GM12878 (cell line): ENCODE measurements at regions of chr1 and their contacts with region 1.

Region 1: GRCh38 chr1:176880954-176881595 is 283.4 kb downstream of the ASTN1 start:
- DNase-seq: no peak
- ATAC-seq: peak; percentile 87
- H3K4me3 ChIP-seq: no peak overlapping the region
- H3K27ac ChIP-seq: no peak overlapping the region
- H3K4me1 ChIP-seq: no peaks in the 10 kb centered on the region
- H3K27me3 ChIP-seq: peaks cover 3% of the 10 kb centered on the region in 2 experiments; a peak in 2 of 4 replicates
- CTCF ChIP-seq: peak; percentile 78 to 86 (median 82)
- EP300 ChIP-seq: no peak
- POLR2A ChIP-seq: no peak
- RAD21 ChIP-seq: peak; percentile 72

Region 2: DNA sequence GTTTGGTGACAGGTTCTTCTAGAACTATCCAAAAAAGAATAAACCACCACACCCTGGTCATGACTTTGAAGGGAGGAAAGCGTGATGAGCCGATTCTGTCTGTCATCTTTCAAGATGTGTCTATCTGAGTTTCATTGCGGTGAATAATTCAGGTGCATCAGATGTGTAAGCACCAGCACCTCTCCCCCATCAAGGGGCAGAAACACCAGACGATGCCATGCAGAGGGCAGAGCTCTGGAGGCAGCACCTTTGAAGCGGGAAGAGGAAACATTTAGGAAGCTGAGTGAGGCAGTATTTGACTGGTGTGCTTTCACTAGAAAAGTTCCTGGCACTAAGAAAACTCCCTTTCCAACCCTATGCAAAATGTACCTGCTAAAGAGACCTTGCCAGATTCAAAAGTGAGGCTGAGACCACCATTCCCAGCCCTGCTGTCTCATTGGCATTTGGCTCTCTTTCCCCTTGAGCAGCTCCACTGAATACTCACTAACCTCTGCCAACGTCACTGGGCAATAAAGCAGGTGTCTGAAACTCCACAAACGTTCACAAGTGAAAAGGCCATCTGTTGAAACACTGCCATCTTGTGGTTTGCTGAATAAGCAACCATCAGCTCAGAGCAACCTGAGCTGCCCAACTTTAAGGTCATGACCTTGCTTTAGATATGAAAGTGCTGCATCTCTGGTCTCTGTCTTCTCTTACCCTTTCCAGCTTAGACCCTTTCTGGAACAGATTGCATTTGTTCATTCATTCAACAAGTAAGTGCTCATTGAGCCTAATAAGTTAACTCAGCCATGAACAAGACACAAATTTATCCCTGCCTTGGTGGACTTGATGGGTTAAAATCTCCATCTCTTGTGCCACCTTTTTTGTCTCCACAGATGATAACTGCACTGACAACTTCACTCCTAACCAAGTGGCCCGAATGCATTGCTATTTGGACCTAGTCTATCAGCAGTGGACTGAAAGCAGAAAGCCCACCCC is 189.5 kb before region 1 on chr1:
- CTCF ChIA-PET with region 1: no interaction called
- POLR2A ChIA-PET with region 1: no interaction called
- RAD21 ChIA-PET with region 1: no interaction called
- SMC1A ChIA-PET with region 1: no interaction called
- in situ Hi-C with region 1: no loop called
- intact Hi-C with region 1: loop called (anchors 5 kb)
- DNase-seq: peak; percentile 17
- ATAC-seq: peak; percentile 94
- H3K4me3 ChIP-seq: no peak overlapping the region
- H3K27ac ChIP-seq: no peak overlapping the region
- H3K4me1 ChIP-seq: no peaks in the 10 kb centered on the region
- H3K27me3 ChIP-seq: no peaks in the 10 kb centered on the region; a peak in 1 of 4 replicates
- CTCF ChIP-seq: peak; percentile 69 to 73 (median 70); a peak in 5 of 6 replicates
- EP300 ChIP-seq: no peak
- POLR2A ChIP-seq: no peak
- RAD21 ChIP-seq: peak; percentile 61

Region 3: GRCh38 chr1:176785791-176786190 is 95.3 kb before region 1 on chr1:
- CTCF ChIA-PET with region 1: no interaction called
- POLR2A ChIA-PET with region 1: no interaction called
- RAD21 ChIA-PET with region 1: no interaction called
- SMC1A ChIA-PET with region 1: no interaction called
- in situ Hi-C with region 1: no loop called
- intact Hi-C with region 1: no loop called
- DNase-seq: no peak
- ATAC-seq: no peak
- H3K4me3 ChIP-seq: no peak overlapping the region
- H3K27ac ChIP-seq: no peak overlapping the region
- H3K4me1 ChIP-seq: no peaks in the 10 kb centered on the region
- H3K27me3 ChIP-seq: no peaks in the 10 kb centered on the region
- CTCF ChIP-seq: no peak
- EP300 ChIP-seq: no peak
- POLR2A ChIP-seq: no peak
- RAD21 ChIP-seq: no peak